Activated CD4-positive, alpha-beta T cell treated with anti-CD3 and anti-CD28 coated beads for 36 hours (primary cell): ENCODE measurements at regions of chr12 and their contacts with region 1.

Region 1: DNA sequence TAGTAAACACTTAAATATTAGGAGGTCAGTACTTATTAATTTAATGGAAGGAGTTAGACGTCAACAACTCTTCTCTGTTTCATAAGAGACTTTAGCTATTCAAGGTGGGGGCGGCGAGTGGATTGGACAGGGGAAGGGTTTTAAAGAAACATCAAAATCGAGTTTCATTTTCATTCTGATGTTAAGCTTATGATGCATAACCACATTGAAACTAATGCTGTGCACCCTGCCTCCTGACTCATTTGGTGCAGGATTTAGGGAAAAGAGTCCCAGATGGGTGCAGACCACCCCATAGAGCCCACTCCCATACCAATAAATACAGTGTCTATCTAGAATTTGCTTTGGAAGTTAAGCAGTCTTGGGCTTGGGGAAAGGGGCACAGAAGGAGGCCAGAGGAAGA is 7.4 kb downstream of the ZBTB39 start:
- DNase-seq: peak; percentile 82
- ATAC-seq: peak; percentile 87
- H3K4me3 Mint-ChIP-seq: no peak overlapping the region
- H3K27ac Mint-ChIP-seq: peak overlapping the region; percentile 38
- H3K4me1 Mint-ChIP-seq: peaks cover 48% of the 10 kb centered on the region
- H3K27me3 Mint-ChIP-seq: no peaks in the 10 kb centered on the region

Region 2: DNA sequence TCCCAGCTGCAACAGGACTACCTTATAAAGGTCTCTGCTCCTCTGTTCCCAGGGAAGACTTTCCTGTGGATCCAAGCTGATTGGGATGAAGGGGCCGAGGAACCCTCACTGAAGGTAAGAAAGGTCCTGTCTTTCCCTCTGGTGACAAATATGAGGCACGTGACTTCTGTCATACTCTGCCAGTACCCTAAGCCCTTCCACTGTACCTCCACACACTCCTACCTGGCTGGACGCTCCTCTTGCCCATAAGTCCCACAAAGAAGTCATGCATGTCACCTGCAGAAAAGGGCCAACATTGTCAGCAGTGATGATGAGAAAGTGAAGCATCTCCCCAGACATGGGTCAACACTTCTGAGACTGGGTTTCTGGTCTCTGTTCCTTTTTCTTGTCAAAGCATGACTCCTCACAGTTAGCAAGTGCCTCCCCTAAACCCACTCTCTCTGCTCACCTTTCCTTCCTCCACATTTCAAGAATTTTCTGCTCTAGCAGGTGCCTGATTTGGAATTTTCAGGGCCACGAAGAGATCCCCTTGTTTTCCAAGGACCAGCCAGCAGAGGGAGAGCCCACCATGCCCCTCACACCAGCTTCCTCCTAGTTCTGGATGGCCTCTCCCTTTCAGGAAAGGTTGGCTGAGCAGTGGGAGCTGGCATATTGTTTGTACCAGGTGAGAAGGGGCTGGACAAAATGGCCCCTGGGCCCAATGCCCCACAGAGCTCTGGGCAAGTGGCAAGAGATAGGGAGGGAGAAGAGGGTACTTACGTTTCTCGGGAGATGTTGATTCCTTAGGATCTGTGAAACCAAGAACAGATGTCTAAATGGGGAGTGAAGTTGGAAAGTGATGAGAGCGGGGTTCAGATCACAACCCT is 13.9 kb after region 1 on chr12:
- CTCF ChIA-PET with region 1: interaction called, 35 read pairs
- POLR2A ChIA-PET with region 1: no interaction called
- intact Hi-C with region 1: no loop called
- DNase-seq: no peak
- ATAC-seq: no peak
- H3K4me3 Mint-ChIP-seq: no peak overlapping the region
- H3K27ac Mint-ChIP-seq: peak overlapping the region; percentile 56
- H3K4me1 Mint-ChIP-seq: peaks cover 41% of the 10 kb centered on the region
- H3K27me3 Mint-ChIP-seq: no peaks in the 10 kb centered on the region